A549 (cell line): ENCODE measurements at regions of chr15 and their contacts with region 1.

Region 1: DNA sequence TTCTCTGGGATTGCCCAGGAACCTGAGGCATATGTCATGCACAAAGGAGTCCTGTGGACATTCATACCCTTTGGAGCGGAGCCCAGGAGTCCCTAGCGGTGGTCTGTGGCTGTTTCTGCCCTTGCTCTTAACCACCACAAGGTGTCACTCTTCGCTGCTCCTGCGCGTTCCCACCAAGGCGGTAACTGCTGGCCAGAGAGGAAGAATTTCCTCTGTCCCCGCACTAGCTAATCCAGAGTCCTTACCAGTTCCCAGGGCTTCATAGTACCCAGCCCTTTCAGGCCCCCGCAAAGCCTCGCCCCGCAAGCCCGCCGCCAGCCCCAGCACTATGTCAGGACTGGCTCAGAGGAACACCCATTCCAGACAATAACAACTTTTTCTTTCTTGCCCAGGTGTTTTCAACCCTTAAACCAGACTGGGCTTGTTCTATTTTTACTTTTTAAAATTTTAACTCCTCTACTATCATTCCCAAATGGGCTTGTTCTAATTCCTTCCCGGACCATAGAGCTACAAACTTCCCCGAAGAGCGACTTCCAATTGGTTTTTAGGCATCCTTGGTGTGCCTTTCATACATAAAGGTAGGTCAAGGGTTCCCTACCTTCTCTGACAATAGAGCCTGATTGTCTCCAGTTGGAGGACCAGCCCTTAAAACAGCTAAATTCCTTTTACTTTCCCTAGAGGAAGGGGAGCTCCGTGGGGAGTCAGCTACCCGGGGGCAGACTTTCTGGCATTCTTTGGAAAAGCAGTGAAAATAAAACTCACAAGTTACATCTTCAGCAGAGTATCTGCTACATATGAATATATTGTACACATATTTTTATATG is 31.8 kb upstream of the ZNF774 start:
- DNase-seq: peak; percentile 92 to 95
- ATAC-seq: peak; percentile 98 to 99
- H3K4me3 ChIP-seq: no peak overlapping the region
- H3K27ac ChIP-seq: peak overlapping the region; percentile 60 to 76
- H3K4me1 ChIP-seq: peaks cover 13% of the 10 kb centered on the region
- CTCF ChIP-seq: peak; percentile 99
- EP300 ChIP-seq: no peak
- POLR2A ChIP-seq: no peak
- RAD21 ChIP-seq: peak; percentile 99 to 100

Region 2: GRCh38 chr15:90306560-90306959 is 13.7 kb before region 1 on chr15:
- CTCF ChIA-PET with region 1: interaction called, 65 read pairs
- POLR2A ChIA-PET with region 1: no interaction called
- DNase-seq: no peak
- ATAC-seq: no peak
- H3K4me3 ChIP-seq: no peak overlapping the region
- H3K27ac ChIP-seq: no peak overlapping the region
- H3K4me1 ChIP-seq: no peaks in the 10 kb centered on the region
- CTCF ChIP-seq: no peak
- EP300 ChIP-seq: no peak
- POLR2A ChIP-seq: no peak
- RAD21 ChIP-seq: no peak

Region 3: DNA sequence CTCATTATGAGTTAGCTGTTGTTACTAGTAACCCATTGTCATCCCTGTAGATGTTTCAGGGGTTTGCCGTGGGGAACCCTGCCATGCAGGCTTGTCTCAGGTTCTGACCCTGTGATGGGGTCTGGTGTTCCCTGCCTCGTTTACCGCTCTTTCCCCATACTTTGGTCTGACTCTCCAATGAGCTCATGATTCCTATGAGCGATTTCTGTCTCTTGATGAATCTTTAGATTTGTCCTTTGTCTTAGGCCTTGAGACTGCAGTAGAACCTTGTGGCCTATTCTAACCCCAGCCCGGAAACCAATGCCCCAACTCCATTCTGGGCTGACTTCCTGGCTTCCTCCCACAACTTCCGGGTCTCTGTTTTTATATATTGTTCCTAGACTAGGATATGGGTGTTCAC is 56.5 kb after region 1 on chr15:
- CTCF ChIA-PET with region 1: interaction called, 23 read pairs
- POLR2A ChIA-PET with region 1: no interaction called
- DNase-seq: no peak
- ATAC-seq: no peak
- H3K4me3 ChIP-seq: no peak overlapping the region
- H3K27ac ChIP-seq: no peak overlapping the region
- H3K4me1 ChIP-seq: peaks cover 3% of the 10 kb centered on the region; the same call in 1 of the 3 replicates
- CTCF ChIP-seq: no peak
- EP300 ChIP-seq: no peak
- POLR2A ChIP-seq: no peak
- RAD21 ChIP-seq: no peak

Region 4: DNA sequence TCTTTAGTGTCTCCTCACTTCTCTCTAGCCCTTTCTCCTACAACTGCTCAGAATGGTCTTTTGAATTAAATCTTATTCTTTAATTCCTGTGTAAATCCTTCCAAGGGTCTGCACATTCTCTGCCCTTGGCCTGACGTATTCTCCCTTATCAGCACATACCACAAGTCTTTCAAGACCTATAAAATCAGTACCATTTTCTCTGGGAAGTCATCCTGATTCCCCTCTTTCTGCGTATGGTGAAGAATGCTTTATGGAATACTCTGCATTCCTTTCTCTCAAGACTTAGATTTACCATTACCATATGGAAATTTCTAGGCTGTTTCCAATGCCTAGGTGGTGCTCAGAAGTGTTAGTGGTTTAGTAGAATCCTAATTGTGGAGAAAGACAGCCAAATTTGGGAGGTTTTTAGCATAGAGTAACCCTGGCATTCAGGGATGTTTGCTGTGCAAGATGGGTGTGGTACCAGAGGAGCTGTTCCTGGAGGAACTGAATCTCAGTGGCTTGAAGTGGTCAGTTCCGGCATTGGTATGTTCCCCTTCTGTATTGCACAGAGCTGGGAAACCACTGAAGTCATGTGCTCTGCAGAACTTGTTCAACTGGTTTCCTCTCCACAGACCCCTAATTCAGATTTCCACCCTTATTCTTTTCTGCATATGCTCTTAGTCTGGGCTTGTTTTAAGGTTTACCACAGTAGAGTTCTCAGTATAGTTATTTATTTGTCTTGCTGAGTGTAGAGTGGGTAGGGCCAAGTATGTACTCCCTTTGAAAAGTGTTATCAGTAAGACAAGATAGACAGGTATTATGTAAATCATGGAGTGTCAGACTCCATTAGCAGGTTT is 92.3 kb after region 1 on chr15:
- CTCF ChIA-PET with region 1: interaction called, 15 read pairs
- POLR2A ChIA-PET with region 1: no interaction called
- DNase-seq: peak in 1 of 2 experiments; percentile 47
- ATAC-seq: peak; percentile 81 to 88
- H3K4me3 ChIP-seq: no peak overlapping the region; the same call in 2 of the 3 replicates
- H3K27ac ChIP-seq: peak overlapping the region; percentile 65 to 72; a peak in 4 of 6 replicates
- H3K4me1 ChIP-seq: peaks cover 52% of the 10 kb centered on the region
- CTCF ChIP-seq: no peak
- EP300 ChIP-seq: no peak
- POLR2A ChIP-seq: no peak
- RAD21 ChIP-seq: no peak

Region 5: GRCh38 chr15:90451053-90451850 is 131.0 kb after region 1 on chr15:
- CTCF ChIA-PET with region 1: interaction called, 44 read pairs
- POLR2A ChIA-PET with region 1: no interaction called
- DNase-seq: peak in 1 of 2 experiments; percentile 9
- ATAC-seq: 0 out of 6 replicates have a peak, but pooled peaks of 1 of the 2 experiments have one; percentile 18
- H3K4me3 ChIP-seq: no peak overlapping the region
- H3K27ac ChIP-seq: no peak overlapping the region
- H3K4me1 ChIP-seq: no peaks in the 10 kb centered on the region
- CTCF ChIP-seq: no peak
- EP300 ChIP-seq: no peak
- POLR2A ChIP-seq: no peak
- RAD21 ChIP-seq: no peak

Region 6: DNA sequence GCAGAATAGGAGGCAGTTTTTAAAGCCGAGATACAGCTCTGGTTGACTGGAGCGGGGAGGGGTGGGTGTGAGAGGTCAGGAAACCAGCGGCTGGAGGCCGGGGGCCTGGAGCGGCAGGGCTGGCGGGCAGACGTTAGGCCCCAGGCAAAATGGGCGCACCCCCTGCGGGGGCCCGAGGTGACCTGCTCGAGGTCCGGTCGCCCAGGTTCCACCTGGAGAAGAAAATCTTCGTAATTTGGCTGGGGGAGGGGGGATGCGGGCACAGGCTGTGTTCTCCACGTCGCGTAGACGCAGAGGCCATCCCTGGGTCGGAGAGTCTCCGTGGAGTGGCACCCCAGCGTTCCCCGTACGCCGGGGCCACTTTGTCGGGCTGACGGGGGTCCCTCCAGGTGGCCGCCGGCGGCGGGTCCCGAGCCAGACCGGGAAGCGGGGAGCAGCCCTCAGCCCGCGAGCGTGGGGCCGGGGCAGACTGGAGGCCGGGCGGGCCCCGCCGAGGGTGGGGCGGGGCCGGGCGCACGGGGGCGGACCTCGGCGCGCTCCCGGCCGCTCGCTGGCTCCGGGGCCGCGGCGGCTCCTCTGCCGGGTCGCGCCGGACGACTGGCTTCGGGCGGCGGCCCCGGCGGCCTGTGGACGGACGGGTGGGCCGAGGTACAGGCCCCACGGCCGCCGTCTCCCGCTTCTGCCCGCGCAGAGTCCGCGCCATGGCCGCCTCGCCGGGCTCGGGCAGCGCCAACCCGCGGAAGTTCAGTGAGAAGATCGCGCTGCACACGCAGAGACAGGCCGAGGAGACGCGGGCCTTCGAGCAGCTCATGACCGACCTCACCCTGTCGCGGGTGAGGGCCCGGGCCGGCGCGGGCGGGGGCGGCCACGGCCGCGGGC is 209.3 kb after region 1 on chr15 and contains the start of gene CRTC3:
- CTCF ChIA-PET with region 1: interaction called, 12 read pairs
- POLR2A ChIA-PET with region 1: no interaction called
- DNase-seq: peak; percentile 68 to 74
- ATAC-seq: peak; percentile 90
- H3K4me3 ChIP-seq: peak within 1 kb of the TSS; percentile 66
- H3K27ac ChIP-seq: peak within 1 kb of the TSS; percentile 86 to 96
- H3K4me1 ChIP-seq: peaks cover 13% of the 10 kb centered on the region; the same call in 2 of the 3 replicates
- CTCF ChIP-seq: peak; percentile 32; the same call in 2 of the 3 replicates
- EP300 ChIP-seq: no peak
- POLR2A ChIP-seq: peak; percentile 82
- RAD21 ChIP-seq: no peak
- polyA plus RNA-seq, gene CRTC3: 28.6 and 30.5 TPM in 2 replicates

Region 7: DNA sequence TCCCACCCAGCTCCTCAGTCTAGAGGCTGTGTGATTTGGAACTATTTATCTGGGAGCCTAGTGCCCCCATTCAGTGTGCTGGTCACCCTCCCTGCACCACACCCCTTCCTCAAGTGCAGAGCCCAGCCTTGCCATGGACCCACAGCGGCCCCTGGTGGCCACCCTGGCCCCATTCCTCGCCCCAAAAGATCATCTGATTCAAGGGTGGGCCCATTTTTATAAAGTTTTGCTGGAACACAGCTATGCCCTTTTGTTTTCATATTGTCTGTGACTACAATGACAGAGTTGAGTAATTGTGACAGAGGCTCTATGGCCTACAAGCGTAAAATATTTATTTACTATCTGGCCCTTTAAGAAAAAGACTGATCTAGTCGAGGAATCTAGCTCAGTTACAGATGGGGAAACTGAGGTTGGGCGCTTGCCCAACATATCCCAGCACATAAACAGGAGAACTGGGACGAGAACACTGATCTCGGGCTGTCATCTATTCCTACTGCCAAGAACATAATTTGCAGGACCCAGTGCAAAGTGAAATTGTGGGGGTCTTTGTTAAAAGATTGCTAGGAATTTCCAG is 565.9 kb after region 1 on chr15:
- CTCF ChIA-PET with region 1: interaction called, 24 read pairs
- POLR2A ChIA-PET with region 1: no interaction called
- DNase-seq: peak in 1 of 2 experiments; percentile 61
- ATAC-seq: peak; percentile 57 to 82; a peak in 5 of 6 replicates
- H3K4me3 ChIP-seq: no peak overlapping the region
- H3K27ac ChIP-seq: peak overlapping the region in 1 of 2 experiments; percentile 19; a peak in 1 of 6 replicates
- H3K4me1 ChIP-seq: no peaks in the 10 kb centered on the region
- CTCF ChIP-seq: peak; percentile 99
- EP300 ChIP-seq: no peak
- POLR2A ChIP-seq: no peak
- RAD21 ChIP-seq: peak; percentile 100